ENCODE measurements at regions of chr9 and their contacts with region 1.

Region 1: DNA sequence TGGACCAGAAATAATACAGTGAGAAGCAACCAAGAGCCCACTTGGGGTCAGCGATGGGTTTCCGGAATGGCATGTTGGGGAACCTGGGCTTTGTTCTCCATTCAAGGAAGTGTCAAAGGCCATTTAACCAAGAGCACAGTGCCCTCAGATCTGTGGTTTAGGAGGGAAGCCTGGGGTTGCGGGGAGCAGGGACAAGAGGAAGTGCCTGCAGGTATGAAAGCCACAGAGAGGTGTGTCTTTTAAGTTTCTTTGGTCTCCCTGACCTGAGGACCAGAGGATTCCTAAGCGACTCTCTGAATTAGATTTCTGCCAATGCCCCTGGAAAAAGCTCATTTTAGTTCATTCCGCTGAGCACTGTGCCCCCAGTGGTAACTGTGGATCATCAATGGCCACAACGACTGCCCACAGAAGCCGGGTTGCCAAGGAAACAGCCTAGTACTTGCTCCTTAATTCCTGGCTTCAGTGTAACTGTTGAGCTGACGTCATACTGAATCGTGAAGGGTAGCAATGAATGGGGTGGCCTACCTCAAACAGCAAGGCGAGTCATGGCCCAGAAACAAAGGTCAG is 107.3 kb upstream of the SPIN1 start:
- DNase-seq: peak; percentile 76
- ATAC-seq: peak; percentile 21; the same call in 1 of the 2 replicates
- H3K4me3 ChIP-seq: no peak overlapping the region
- H3K27ac ChIP-seq: no peak overlapping the region
- H3K4me1 ChIP-seq: no peaks in the 10 kb centered on the region
- H3K27me3 ChIP-seq: no peaks in the 10 kb centered on the region
- CTCF ChIP-seq: no peak; the same call in 1 of the 2 replicates
- POLR2A ChIP-seq: no peak
- RAD21 ChIP-seq: no peak

Region 2: GRCh38 chr9:88270398-88270797 is 10.5 kb before region 1 on chr9:
- CTCF ChIA-PET with region 1: no interaction called
- POLR2A ChIA-PET with region 1: interaction called, 13 read pairs
- dilution Hi-C with region 1: no loop called
- in situ Hi-C with region 1: no loop called
- intact Hi-C with region 1: no loop called
- DNase-seq: no peak
- ATAC-seq: no peak
- H3K4me3 ChIP-seq: no peak overlapping the region
- H3K27ac ChIP-seq: peak overlapping the region; percentile 13; the same call in 1 of the 2 replicates
- H3K4me1 ChIP-seq: no peaks in the 10 kb centered on the region
- H3K27me3 ChIP-seq: no peaks in the 10 kb centered on the region
- CTCF ChIP-seq: no peak
- POLR2A ChIP-seq: no peak
- RAD21 ChIP-seq: no peak

Region 3: GRCh38 chr9:88379352-88379751 is 98.5 kb after region 1 on chr9:
- CTCF ChIA-PET with region 1: no interaction called
- POLR2A ChIA-PET with region 1: no interaction called
- dilution Hi-C with region 1: no loop called
- in situ Hi-C with region 1: no loop called
- intact Hi-C with region 1: no loop called
- DNase-seq: no peak
- ATAC-seq: no peak
- H3K4me3 ChIP-seq: no peak overlapping the region
- H3K27ac ChIP-seq: no peak overlapping the region
- H3K4me1 ChIP-seq: no peaks in the 10 kb centered on the region
- H3K27me3 ChIP-seq: no peaks in the 10 kb centered on the region
- CTCF ChIP-seq: no peak
- POLR2A ChIP-seq: no peak
- RAD21 ChIP-seq: no peak

Region 4: GRCh38 chr9:88691811-88692210 is 410.9 kb after region 1 on chr9:
- CTCF ChIA-PET with region 1: no interaction called
- POLR2A ChIA-PET with region 1: no interaction called
- dilution Hi-C with region 1: no loop called
- in situ Hi-C with region 1: no loop called
- intact Hi-C with region 1: no loop called
- DNase-seq: peak; percentile 84
- ATAC-seq: peak; percentile 84
- H3K4me3 ChIP-seq: no peak overlapping the region
- H3K27ac ChIP-seq: no peak overlapping the region
- H3K4me1 ChIP-seq: peaks cover 8% of the 10 kb centered on the region
- H3K27me3 ChIP-seq: no peaks in the 10 kb centered on the region
- CTCF ChIP-seq: no peak
- POLR2A ChIP-seq: no peak
- RAD21 ChIP-seq: no peak